ENCODE measurements at regions of chr1 and their contacts with region 1.

Region 1: DNA sequence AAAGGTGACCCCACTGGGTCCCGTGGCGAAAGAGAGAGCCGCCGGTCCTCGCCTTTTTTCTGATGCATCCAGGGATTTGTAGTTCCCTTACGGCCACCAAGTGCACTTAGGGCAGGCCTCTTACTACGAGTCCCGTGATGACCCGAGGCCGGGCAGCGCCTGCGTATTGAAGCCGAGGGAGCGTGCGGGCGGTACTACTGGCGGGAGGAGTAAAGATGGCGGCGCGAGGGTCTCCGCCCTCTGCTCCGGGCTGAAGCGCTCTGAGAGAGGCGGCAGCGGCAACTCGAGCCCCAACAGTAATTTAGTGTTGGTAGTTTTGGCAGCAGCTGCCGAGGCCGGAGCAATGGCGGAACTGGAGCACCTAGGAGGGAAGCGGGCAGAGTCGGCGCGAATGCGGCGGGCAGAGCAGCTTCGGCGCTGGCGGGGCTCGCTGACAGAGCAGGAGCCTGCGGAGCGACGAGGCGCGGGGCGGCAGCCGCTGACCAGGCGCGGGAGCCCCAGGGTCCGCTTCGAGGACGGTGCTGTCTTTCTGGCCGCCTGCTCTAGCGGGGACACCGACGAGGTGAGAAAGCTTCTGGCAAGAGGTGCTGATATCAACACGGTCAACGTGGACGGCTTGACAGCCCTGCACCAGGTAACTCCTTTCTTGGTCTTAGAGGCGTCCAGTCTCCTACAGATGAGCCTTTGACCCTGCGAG is at the start of gene PPP1R12B:
- DNase-seq: peak; percentile 90 to 98 (median 95)
- ATAC-seq: peak; percentile 96
- H3K4me3 ChIP-seq: peak within 1 kb of the TSS; percentile 89 to 96
- H3K4me3 Mint-ChIP-seq: peak within 1 kb of the TSS; percentile 86
- H3K27ac ChIP-seq: peak within 1 kb of the TSS; percentile 61 to 68
- H3K27ac Mint-ChIP-seq: peak within 1 kb of the TSS; percentile 92
- H3K4me1 ChIP-seq: peaks cover 17% of the 10 kb centered on the region
- H3K4me1 Mint-ChIP-seq: peaks cover 38% of the 10 kb centered on the region
- H3K27me3 ChIP-seq: no peaks in the 10 kb centered on the region
- H3K27me3 Mint-ChIP-seq: no peaks in the 10 kb centered on the region
- CTCF ChIP-seq: no peak
- total RNA-seq, gene PPP1R12B: 11.6 to 12.3 TPM

Region 2: DNA sequence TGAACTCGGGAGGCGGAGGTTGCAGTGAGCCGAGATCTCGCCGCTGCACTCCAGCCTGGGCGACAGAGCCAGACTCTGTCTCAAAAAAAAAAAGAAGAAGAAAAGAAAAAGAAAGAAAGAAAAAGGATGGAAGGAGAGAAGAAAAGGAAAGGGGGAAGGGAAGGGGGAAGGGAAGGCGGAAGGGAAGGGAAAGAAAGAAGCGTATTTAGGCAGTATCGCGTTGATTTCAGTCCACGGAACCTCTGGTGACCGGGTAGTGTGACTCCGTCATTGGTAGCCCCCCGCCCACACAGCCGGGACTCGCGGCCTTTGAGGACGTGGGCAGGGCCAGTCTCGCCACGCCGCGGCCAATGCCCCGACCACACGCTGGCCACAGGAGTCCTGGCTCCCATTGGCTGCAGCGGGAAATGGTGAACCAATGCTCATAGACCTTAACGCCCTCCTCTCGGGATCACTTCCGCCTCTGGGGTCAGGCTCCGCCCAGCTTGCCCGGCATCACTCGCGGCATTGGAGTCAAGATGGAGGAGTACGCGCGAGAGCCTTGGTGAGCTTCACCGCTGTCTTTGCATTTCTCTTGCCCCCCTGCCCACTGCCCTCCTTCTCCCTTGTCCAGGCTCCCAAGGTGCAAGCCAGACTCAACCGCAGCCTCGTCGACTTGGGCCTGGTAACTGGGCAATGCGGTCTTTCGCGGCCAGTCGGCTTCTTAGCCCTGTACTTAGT is 393.5 kb before region 1 on chr1 and contains the start of gene TIMM17A:
- CTCF ChIA-PET with region 1: no interaction called
- POLR2A ChIA-PET with region 1: no interaction called
- intact Hi-C with region 1: loop called (anchors 1 to 5 kb)
- DNase-seq: peak; percentile 82 to 96 (median 93)
- ATAC-seq: peak; percentile 99
- H3K4me3 ChIP-seq: peak within 1 kb of the TSS; percentile 91 to 98
- H3K4me3 Mint-ChIP-seq: peak within 1 kb of the TSS; percentile 98
- H3K27ac ChIP-seq: peak within 1 kb of the TSS; percentile 86 to 94
- H3K27ac Mint-ChIP-seq: peak within 1 kb of the TSS; percentile 96
- H3K4me1 ChIP-seq: peaks cover 13% of the 10 kb centered on the region
- H3K4me1 Mint-ChIP-seq: peaks cover 31% of the 10 kb centered on the region
- H3K27me3 ChIP-seq: no peaks in the 10 kb centered on the region
- H3K27me3 Mint-ChIP-seq: no peaks in the 10 kb centered on the region
- CTCF ChIP-seq: no peak
- total RNA-seq, gene TIMM17A: 58.0 to 66.6 TPM

Region 3: DNA sequence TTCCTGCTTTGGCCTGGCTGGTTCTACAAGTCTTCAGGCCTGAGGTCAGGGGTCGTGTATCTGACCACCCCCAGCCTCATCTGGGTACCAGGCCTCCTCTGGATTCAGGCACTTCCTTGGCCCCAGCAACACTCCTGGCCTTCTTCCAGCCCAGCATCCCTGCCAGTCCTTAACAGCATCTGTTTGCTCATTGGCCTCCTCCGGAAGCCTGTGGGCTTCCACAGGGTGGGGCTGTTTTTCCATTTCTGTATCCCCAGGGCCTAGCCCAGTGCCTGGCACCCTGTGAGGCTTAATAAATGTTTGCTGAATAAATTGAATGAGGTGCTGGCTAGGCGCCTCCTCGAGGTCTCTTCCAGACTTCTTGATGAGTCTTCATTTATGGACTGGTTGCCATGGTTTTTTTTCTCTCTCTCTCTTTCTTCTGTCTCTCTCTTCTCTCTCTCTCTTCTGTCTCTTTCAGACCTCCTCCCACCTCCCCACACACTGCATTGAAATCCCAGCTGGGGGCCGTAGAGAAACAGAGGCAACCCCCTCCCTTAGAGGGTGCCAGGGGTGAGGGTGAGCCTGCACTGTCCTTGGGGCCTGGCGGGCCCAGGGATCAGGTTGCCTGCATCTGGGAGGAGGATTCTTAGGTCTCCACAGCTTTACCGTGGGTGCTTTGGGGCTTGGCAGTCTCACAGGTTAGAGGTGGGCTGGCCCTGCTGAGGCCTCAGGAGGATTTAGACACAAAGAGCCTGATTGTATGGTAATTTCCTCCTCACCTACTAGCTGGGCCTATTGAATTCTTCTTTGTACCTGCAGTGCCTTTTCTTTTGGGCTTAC is 247.3 kb before region 1 on chr1:
- CTCF ChIA-PET with region 1: no interaction called
- POLR2A ChIA-PET with region 1: no interaction called
- intact Hi-C with region 1: no loop called
- DNase-seq: no peak
- ATAC-seq: no peak
- H3K4me3 ChIP-seq: no peak overlapping the region
- H3K4me3 Mint-ChIP-seq: no peak overlapping the region
- H3K27ac ChIP-seq: no peak overlapping the region
- H3K27ac Mint-ChIP-seq: no peak overlapping the region
- H3K4me1 ChIP-seq: no peaks in the 10 kb centered on the region
- H3K4me1 Mint-ChIP-seq: no peaks in the 10 kb centered on the region
- H3K27me3 ChIP-seq: no peaks in the 10 kb centered on the region
- H3K27me3 Mint-ChIP-seq: no peaks in the 10 kb centered on the region
- CTCF ChIP-seq: no peak

Region 4: DNA sequence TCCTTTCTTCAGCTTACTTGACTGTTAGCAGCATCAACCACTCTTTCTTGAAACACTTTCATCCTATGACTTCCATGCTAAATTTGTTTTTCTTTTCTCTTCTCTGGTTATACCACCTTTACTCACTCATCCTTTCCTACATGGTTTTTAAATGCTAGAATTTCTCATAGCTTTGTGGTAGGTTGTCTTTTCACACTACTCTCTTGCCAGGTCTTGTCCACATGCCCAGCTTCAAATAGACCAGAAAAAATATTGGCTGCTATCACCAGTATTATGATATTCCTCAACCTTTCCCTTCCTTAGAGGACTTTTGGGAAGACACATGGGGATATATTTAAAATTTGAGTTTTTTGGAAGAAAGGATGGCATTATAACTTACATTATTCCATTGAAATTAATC is 48.6 kb after region 1 on chr1:
- CTCF ChIA-PET with region 1: no interaction called
- POLR2A ChIA-PET with region 1: no interaction called
- intact Hi-C with region 1: no loop called
- DNase-seq: no peak
- ATAC-seq: no peak
- H3K4me3 ChIP-seq: no peak overlapping the region
- H3K4me3 Mint-ChIP-seq: no peak overlapping the region
- H3K27ac ChIP-seq: no peak overlapping the region
- H3K27ac Mint-ChIP-seq: no peak overlapping the region
- H3K4me1 ChIP-seq: no peaks in the 10 kb centered on the region
- H3K4me1 Mint-ChIP-seq: peaks cover 7% of the 10 kb centered on the region
- H3K27me3 ChIP-seq: no peaks in the 10 kb centered on the region
- H3K27me3 Mint-ChIP-seq: no peaks in the 10 kb centered on the region
- CTCF ChIP-seq: no peak

Region 5: GRCh38 chr1:202716654-202717053 is 368.0 kb after region 1 on chr1:
- CTCF ChIA-PET with region 1: interaction called, 25 read pairs
- POLR2A ChIA-PET with region 1: no interaction called
- intact Hi-C with region 1: loop called in 1 of 2 experiments (anchors 1 kb)
- DNase-seq: no peak
- ATAC-seq: no peak
- H3K4me3 ChIP-seq: no peak overlapping the region
- H3K4me3 Mint-ChIP-seq: no peak overlapping the region
- H3K27ac ChIP-seq: no peak overlapping the region
- H3K27ac Mint-ChIP-seq: no peak overlapping the region
- H3K4me1 ChIP-seq: no peaks in the 10 kb centered on the region
- H3K4me1 Mint-ChIP-seq: peaks cover 3% of the 10 kb centered on the region
- H3K27me3 ChIP-seq: no peaks in the 10 kb centered on the region
- H3K27me3 Mint-ChIP-seq: peaks cover 22% of the 10 kb centered on the region
- CTCF ChIP-seq: no peak

Region 6: GRCh38 chr1:202957733-202958543 is 609.3 kb after region 1 on chr1 and contains the start of gene ADIPOR1:
- CTCF ChIA-PET with region 1: no interaction called
- POLR2A ChIA-PET with region 1: no interaction called
- intact Hi-C with region 1: loop called in 1 of 2 experiments (anchors 2 kb)
- DNase-seq: peak; percentile 89 to 96 (median 94)
- ATAC-seq: peak; percentile 97
- H3K4me3 ChIP-seq: peak within 1 kb of the TSS; percentile 89 to 93
- H3K4me3 Mint-ChIP-seq: peak within 1 kb of the TSS; percentile 81
- H3K27ac ChIP-seq: peak within 1 kb of the TSS; percentile 89 to 94
- H3K27ac Mint-ChIP-seq: peak within 1 kb of the TSS; percentile 92
- H3K4me1 ChIP-seq: peaks cover 36% of the 10 kb centered on the region
- H3K4me1 Mint-ChIP-seq: peaks cover 46% of the 10 kb centered on the region
- H3K27me3 ChIP-seq: no peaks in the 10 kb centered on the region
- H3K27me3 Mint-ChIP-seq: no peaks in the 10 kb centered on the region
- CTCF ChIP-seq: no peak
- total RNA-seq, gene ADIPOR1: 106 to 117 TPM

Region 7: DNA sequence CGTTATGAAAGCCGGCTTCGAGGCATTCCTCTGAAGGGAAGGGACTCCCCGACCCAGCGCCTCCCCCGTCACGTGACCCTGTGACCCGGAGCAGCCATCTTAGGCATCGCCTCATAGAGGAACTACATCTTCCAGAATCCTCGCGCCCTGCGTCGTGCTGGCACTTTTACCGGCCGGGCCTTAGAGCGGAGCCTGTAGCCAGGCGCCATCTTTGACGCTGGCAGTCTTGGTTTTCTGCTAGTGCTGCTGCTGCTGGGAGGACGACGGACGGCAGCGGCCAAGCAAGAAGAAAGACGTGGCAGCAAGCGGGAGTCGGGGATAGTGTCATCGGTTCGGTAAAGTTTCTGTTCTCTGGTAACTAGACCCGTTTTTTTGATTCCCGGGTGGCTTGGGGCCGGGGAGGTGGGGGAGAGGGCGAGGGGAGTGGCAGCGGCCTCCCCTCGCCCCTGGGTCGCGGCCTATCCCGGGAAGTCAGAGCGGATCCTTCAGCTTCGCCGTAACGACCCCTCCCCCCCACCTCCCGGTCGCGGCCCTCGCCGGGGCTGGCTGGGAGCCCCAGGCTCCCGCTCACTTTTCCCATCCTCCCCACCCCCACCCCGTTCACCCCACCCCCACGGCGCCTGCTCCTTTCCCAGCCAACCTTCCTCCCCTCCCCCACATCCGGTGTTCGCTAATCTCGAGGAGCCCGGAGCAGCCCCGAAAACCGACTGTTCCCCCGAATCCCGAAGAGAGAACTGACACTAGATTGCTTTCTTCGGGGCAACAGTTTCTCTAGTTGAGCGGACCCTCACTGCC is 1447.0 kb after region 1 on chr1 and contains the starts of genes ZBED6 and ZC3H11A:
- CTCF ChIA-PET with region 1: no interaction called
- POLR2A ChIA-PET with region 1: no interaction called
- intact Hi-C with region 1: loop called in 1 of 2 experiments (anchors 10 kb)
- DNase-seq: peak; percentile 96 to 100 (median 97)
- ATAC-seq: peak; percentile 96
- H3K4me3 ChIP-seq: peak within 1 kb of the TSS; percentile 67 to 73
- H3K4me3 Mint-ChIP-seq: peak within 1 kb of the TSS; percentile 96
- H3K27ac ChIP-seq: peak within 1 kb of the TSS; percentile 54 to 92
- H3K27ac Mint-ChIP-seq: peak within 1 kb of the TSS; percentile 97
- H3K4me1 ChIP-seq: peaks cover 42% of the 10 kb centered on the region
- H3K4me1 Mint-ChIP-seq: peaks cover 53% of the 10 kb centered on the region
- H3K27me3 ChIP-seq: no peaks in the 10 kb centered on the region
- H3K27me3 Mint-ChIP-seq: no peaks in the 10 kb centered on the region
- CTCF ChIP-seq: no peak
- total RNA-seq, gene ZBED6: 25.0 to 25.8 TPM
- total RNA-seq, gene ZC3H11A: 72.7 to 77.2 TPM